ENCODE measurements at regions of chr12 and their contacts with region 1.

Region 1: DNA sequence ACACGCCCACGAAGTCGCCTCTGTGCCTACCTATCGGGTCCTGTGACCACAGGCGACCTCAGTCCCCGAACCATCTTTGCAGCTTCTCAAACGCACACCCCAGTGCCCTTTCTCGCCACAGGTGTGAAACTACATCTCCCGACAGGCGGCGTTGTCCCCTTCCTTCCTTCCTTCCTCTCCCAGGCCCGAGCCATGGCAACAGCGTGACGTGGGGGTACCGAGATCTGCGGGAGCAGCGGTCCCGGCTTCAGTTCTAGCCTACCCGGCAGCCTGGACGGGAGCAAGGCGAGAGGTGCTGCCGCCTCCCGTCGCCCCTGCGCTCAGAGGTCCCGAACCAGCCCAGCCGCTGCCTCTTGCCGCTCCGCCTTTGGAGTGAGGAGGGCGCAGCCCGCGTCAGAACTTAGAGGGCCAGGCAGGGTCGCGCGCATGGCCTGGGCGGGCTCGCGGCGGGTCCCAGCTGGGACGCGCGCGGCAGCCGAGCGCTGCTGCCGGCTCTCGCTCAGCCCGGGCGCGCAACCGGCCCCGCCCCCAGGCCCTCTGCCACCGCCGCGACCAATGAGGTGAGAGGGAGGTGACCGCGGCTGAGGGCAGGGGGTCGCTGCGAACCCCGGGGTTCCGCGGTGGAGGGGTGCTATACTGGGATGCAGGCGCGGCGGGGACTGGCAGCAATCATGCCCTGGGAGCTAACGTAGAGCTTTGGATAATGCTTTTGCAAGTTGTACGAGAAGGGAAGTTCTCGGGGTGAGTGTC is at the start of gene COQ10A:
- DNase-seq: peak; percentile 98
- H3K4me3 ChIP-seq: peak within 1 kb of the TSS; percentile 69 to 74
- H3K27ac ChIP-seq: peak within 1 kb of the TSS; percentile 88 to 92
- H3K4me1 ChIP-seq: peaks cover 4 to 8% of the 10 kb centered on the region in 2 experiments; a peak in 1 of 4 replicates
- H3K27me3 ChIP-seq: no peaks in the 10 kb centered on the region
- CTCF ChIP-seq: peak; percentile 62
- EP300 ChIP-seq: no peak
- RAD21 ChIP-seq: no peak
- polyA plus RNA-seq, gene COQ10A: 42.2 and 56.2 TPM in 2 replicates

Region 2: DNA sequence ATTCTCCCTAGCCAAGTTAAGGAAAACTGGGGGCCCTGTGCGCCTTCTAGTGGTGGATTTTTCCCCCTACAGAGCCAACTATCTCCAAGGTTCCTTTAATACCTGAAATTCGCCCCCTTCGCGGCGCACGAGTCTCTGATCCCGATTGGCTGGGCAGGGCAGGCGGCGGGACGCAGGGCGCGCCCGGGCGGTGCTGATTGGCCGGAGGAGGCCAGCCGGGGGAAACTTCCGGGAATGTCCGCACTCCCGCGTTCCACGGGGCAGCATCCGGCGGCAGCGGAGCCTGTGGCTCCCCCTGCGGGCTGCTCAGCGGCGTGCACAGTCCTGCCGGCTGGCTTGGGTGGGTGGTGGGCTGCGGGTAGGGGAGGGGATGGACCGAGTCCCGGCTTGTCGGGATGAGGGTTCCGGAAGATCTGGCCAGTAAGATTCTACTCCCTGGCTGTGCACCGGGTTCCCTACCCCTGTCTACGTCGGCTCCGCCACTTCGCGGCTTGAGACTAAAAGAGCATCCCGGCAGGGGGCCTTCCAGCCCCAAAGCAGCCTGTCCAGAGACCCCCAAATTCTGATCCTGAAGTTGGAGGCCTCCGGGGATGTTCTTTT is 42.7 kb before region 1 on chr12 and contains the start of gene NABP2:
- CTCF ChIA-PET with region 1: interaction called, 11 read pairs
- POLR2A ChIA-PET with region 1: interaction called, 7 read pairs
- DNase-seq: peak; percentile 98
- H3K4me3 ChIP-seq: peak within 1 kb of the TSS; percentile 67 to 97
- H3K27ac ChIP-seq: peak within 1 kb of the TSS; percentile 62 to 64
- H3K4me1 ChIP-seq: peaks cover 13 to 22% of the 10 kb centered on the region in 2 experiments; a peak in 2 of 4 replicates
- H3K27me3 ChIP-seq: no peaks in the 10 kb centered on the region
- CTCF ChIP-seq: peak; percentile 89
- EP300 ChIP-seq: no peak; a peak in 1 of 4 replicates
- RAD21 ChIP-seq: peak; percentile 56
- polyA plus RNA-seq, gene NABP2: 49.3 and 52.3 TPM in 2 replicates

Region 3: DNA sequence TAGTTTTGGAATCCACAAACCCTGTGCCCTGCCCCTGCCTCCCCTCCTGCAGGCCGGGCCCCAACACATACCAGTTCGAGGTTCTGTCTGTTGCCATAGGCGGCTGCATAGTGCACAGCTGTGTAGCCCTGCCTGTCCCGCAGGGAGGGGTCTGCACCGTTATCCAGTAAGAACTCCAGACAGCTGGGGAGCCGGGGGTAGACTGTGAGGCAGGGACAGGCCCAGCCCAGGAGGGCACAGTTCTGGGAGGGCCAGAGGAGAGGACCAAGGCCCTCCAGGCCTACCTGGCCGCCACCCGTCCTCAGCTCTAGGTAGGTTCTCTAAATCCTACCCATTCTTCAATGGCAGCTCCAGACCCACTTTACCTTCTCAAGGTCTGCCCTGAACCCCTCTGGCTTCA is 18.2 kb before region 1 on chr12:
- CTCF ChIA-PET with region 1: interaction called, 13 read pairs
- POLR2A ChIA-PET with region 1: no interaction called
- DNase-seq: no peak
- H3K4me3 ChIP-seq: no peak overlapping the region
- H3K27ac ChIP-seq: no peak overlapping the region
- H3K4me1 ChIP-seq: no peaks in the 10 kb centered on the region
- H3K27me3 ChIP-seq: no peaks in the 10 kb centered on the region
- CTCF ChIP-seq: no peak
- EP300 ChIP-seq: no peak
- RAD21 ChIP-seq: no peak

Region 4: GRCh38 chr12:56278905-56279304 is 12.0 kb after region 1 on chr12:
- CTCF ChIA-PET with region 1: interaction called, 18 read pairs
- POLR2A ChIA-PET with region 1: interaction called, 9 read pairs
- DNase-seq: no peak
- H3K4me3 ChIP-seq: no peak overlapping the region
- H3K27ac ChIP-seq: no peak overlapping the region
- H3K4me1 ChIP-seq: no peaks in the 10 kb centered on the region
- H3K27me3 ChIP-seq: no peaks in the 10 kb centered on the region
- CTCF ChIP-seq: no peak
- EP300 ChIP-seq: no peak
- RAD21 ChIP-seq: no peak

Measured in SK-N-SH (cell line).